ENCODE measurements at regions of chr3 and their contacts with region 1.

Region 1: DNA sequence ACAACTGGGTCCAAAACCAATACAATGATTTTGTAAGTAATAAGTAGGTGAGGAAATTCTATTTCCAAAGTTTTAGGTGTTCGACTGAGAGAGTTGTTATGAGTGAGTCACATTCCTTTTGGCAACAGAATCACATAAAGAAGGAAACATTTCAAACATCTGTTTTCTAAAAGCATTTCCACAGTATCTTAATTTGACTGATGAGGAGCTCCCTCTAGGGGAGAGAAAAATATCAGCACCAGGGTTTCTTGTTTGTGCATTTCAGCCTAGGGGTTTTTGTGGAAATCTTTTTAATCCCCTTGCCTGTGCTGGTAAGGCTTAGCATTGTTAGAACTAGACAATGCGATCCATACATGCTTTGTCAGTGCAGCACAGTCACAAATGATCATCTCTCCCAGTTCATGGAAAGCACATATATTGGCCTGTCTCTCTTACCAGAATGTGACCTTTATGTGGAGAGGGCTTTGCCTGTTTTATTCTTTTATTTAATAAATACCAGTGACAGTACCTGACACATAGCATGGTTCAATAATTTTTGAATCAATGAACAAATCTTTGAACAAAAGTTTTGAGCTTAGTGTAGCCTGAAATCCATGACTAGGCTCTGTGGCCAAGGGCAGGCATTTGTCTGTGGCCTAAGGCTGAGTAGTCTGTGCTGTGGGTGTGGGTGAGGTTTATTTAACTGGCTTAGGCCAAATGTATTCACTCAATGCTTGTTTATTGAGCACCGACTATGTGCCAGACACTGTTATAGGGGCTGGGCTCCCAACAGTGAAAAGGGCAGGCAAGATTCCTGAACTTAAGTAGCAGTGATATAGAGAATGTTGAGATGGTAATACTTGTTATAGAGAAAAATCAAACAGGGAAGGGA is 21.1 kb upstream of the IQCF6 start:
- DNase-seq: peak; percentile 20 to 50 (median 32)
- ATAC-seq: peak; percentile 65
- H3K4me3 ChIP-seq: no peak overlapping the region
- H3K27ac ChIP-seq: no peak overlapping the region
- H3K4me1 ChIP-seq: no peaks in the 10 kb centered on the region; a peak in 1 of 5 replicates
- H3K27me3 ChIP-seq: peaks cover 0 to 7% of the 10 kb centered on the region in 2 experiments; a peak in 1 of 5 replicates
- CTCF ChIP-seq: peak; percentile 50 to 71 (median 63); a peak in 5 of 6 replicates
- EP300 ChIP-seq: no peak
- POLR2A ChIP-seq: no peak
- RAD21 ChIP-seq: peak; percentile 48 to 71

Region 2: DNA sequence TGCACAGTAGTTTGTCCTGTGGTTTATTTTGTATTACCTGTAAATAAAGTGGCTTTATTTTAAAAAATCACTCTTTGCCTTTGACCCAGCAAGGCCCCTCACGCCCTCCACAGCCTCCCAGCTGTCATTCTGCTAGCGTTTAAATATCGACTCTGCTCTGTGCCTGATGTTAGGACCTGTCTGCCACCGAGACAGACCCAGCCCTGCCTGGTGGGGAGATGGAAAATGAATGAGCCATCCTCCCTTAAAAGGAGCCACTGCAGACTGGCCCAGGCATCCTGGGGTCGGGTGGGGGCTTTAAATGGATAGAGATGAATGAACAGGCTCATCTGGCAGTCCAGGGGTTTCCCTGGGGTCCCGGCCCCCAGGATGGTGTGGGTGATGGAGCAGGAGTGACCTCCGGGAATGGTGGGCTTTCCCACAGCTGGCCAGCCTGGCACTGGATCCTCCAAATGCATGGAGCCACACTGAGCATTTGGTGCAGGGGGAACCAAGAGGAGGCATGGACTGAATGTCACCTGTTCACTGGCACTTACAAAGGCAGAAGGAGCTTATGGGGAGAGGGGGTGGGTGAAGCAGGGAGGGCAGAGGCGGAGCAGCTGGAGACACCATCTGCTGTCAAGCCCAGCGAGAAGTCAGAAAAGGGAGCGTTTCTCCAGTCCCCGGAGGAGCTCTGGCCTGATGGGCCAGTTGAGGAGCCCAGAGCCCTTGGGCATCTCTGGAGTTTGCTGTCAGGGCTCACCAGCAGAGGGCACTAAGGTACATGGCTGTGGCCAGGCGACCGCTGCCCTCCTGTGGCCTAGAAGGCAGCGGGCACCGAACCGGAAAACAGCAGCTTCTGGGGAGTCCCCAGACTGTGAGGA is 81.3 kb before region 1 on chr3:
- CTCF ChIA-PET with region 1: no interaction called
- POLR2A ChIA-PET with region 1: no interaction called
- in situ Hi-C with region 1: no loop called
- intact Hi-C with region 1: loop called (anchors 5 kb)
- DNase-seq: peak; percentile 51 to 62 (median 58)
- ATAC-seq: peak; percentile 91
- H3K4me3 ChIP-seq: no peak overlapping the region
- H3K27ac ChIP-seq: no peak overlapping the region
- H3K4me1 ChIP-seq: no peaks in the 10 kb centered on the region; a peak in 1 of 5 replicates
- H3K27me3 ChIP-seq: peaks cover 0 to 38% of the 10 kb centered on the region in 2 experiments; a peak in 4 of 5 replicates
- CTCF ChIP-seq: peak; percentile 84 to 100 (median 98)
- EP300 ChIP-seq: no peak
- POLR2A ChIP-seq: no peak
- RAD21 ChIP-seq: peak; percentile 59 to 80

Region 3: DNA sequence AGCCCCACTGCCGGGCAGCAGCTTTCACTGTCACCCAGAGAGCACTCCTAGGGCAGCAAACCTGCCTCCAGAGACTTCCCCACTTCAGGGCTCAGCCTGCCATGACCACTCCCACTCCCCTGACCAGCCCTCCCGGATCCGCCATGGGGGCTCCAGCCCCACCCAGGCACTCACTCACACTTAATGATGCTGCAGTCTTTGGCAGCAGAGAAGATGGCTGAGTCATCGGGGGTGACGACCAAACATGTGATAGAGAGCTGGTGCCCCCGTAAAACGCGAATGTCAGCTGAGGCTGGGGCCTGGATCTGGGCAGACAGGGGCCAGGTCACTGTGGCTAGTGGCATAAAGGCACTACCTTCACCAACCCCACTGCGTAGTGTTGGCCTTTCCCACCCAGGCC is 136.9 kb after region 1 on chr3:
- CTCF ChIA-PET with region 1: no interaction called
- POLR2A ChIA-PET with region 1: no interaction called
- in situ Hi-C with region 1: no loop called
- intact Hi-C with region 1: no loop called
- DNase-seq: peak in 2 of 4 experiments; percentile 29 to 30
- ATAC-seq: no peak
- H3K4me3 ChIP-seq: no peak overlapping the region
- H3K27ac ChIP-seq: no peak overlapping the region
- H3K4me1 ChIP-seq: peaks cover 8 to 11% of the 10 kb centered on the region in 2 experiments; a peak in 4 of 5 replicates
- H3K27me3 ChIP-seq: no peaks in the 10 kb centered on the region
- CTCF ChIP-seq: no peak
- EP300 ChIP-seq: no peak
- POLR2A ChIP-seq: no peak
- RAD21 ChIP-seq: no peak

Measured in K562 (cell line).